Right cardiac atrium (tissue), 5 donors: ENCODE measurements at regions of chr14 and their contacts with region 1.

Region 1: DNA sequence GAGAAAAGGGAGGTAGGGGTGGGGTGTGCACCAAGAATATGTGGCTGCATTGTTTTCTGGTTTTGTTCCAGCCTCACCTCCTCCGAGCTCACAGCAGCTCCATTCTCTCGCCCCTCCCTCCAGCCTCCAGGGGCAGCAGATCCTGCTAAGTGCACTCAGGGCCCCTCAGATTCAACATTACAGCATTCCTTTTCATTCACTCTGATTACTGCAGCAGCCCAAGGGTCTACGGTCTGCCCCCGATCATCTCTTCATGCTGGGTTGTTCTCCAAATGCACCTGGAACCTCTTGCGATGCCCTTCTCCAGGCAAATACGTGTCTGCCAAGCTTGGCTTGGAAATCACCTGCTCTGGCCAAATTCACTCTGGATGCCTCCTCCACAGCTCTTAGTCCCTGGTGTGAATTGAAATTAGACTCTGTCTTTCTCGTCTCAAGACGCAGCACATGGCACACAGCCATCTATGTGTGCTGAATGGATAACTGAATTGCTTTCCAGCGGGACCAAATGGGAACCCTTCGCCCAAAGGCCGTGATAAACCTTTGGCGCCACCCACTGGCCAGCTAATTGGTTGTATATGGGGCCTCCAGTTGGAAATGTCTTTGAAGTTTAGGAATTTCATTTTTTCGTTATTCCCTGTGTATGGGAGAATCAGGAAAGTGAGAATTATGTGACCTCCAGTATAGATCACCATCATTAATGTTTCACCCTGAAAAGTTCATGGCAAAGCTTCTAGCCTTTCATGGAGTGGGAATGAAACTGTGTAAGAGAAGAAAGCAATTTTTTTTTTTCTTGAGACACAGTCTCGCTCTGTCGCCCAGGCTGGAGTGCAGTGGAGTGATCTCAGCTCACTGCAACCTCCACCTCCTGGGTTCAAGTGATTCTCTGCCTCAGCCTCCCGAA is 9.6 kb upstream of the HSP90AA1 start:
- DNase-seq: peak; percentile 89 to 96 (median 92)
- ATAC-seq: peak; percentile 85 to 89
- H3K4me3 ChIP-seq: no peak overlapping the region
- H3K27ac ChIP-seq: no peak overlapping the region
- H3K4me1 ChIP-seq: peaks cover 3% of the 10 kb centered on the region
- H3K27me3 ChIP-seq: no peaks in the 10 kb centered on the region

Region 2: GRCh38 chr14:102046343-102047278 is 49.9 kb before region 1 on chr14:
- intact Hi-C with region 1: loop called in 2 of 4 experiments (anchors 10 kb)
- DNase-seq: peak; percentile 91 to 95 (median 95)
- ATAC-seq: peak; percentile 91 to 92
- H3K4me3 ChIP-seq: no peak overlapping the region
- H3K27ac ChIP-seq: no peak overlapping the region
- H3K4me1 ChIP-seq: no peaks in the 10 kb centered on the region
- H3K27me3 ChIP-seq: no peaks in the 10 kb centered on the region

Region 3: GRCh38 chr14:102063091-102063802 is 33.2 kb before region 1 on chr14:
- intact Hi-C with region 1: loop called in 2 of 4 experiments (anchors 2 to 5 kb)
- DNase-seq: peak; percentile 90 to 96 (median 95)
- ATAC-seq: peak; percentile 96
- H3K4me3 ChIP-seq: no peak overlapping the region
- H3K27ac ChIP-seq: no peak overlapping the region
- H3K4me1 ChIP-seq: no peaks in the 10 kb centered on the region
- H3K27me3 ChIP-seq: no peaks in the 10 kb centered on the region